ENCODE measurements at regions of chr5 and their contacts with region 1.

Region 1: DNA sequence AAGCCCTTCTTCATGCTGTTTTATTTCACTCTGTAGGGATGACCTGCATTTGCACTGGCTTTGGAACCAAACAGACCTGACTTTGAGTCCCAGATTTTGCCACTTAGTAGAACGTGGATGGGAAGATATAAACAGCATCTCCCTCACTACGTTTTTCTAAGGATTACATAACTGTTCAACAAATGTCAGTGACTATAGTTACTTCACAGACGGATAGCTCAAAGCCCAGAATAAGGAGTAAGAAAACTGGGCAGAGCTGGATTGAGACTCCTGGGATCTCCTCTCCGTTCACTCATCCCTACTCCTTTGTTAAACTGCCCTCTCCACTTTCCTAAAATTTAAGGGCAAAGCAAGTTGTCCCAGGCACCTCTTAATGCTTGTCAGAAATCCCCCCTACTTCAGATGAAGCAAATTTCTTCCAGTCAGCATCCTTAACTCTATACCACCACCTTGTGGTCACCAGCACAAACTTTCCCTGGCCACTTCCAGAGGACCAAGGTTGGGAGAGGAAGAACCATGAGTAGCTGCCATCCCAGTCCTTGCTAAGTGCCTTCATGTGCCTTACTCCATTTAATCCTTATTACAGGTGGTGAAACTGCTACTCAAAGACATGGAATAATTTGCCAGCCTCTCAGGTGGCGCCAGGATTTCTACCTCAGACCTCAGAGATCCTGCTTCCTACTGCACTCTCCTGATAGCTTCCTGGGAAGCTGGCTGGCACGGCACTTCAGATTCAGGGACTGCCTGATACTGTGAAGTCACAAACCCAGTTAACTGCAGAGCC is 38.4 kb downstream of the EGR1 start:
- DNase-seq: peak in 5 of 9 experiments; percentile 2 to 79 (median 36)
- ATAC-seq: peak; percentile 79
- H3K4me3 ChIP-seq: no peak overlapping the region
- H3K4me3 Mint-ChIP-seq: no peak overlapping the region
- H3K27ac ChIP-seq: no peak overlapping the region
- H3K27ac Mint-ChIP-seq: no peak overlapping the region
- H3K4me1 ChIP-seq: no peaks in the 10 kb centered on the region
- H3K4me1 Mint-ChIP-seq: peaks cover 2% of the 10 kb centered on the region
- H3K27me3 ChIP-seq: no peaks in the 10 kb centered on the region
- H3K27me3 Mint-ChIP-seq: no peaks in the 10 kb centered on the region
- CTCF ChIP-seq: peak; percentile 72

Region 2: GRCh38 chr5:137867664-137868063 is 636.0 kb before region 1 on chr5 and contains the start of gene MYOT:
- CTCF ChIA-PET with region 1: no interaction called
- POLR2A ChIA-PET with region 1: no interaction called
- intact Hi-C with region 1: no loop called
- DNase-seq: no peak
- ATAC-seq: no peak
- H3K4me3 ChIP-seq: no peak within 1 kb of the TSS
- H3K4me3 Mint-ChIP-seq: no peak within 1 kb of the TSS
- H3K27ac ChIP-seq: no peak within 1 kb of the TSS
- H3K27ac Mint-ChIP-seq: no peak within 1 kb of the TSS
- H3K4me1 ChIP-seq: no peaks in the 10 kb centered on the region
- H3K4me1 Mint-ChIP-seq: no peaks in the 10 kb centered on the region
- H3K27me3 ChIP-seq: no peaks in the 10 kb centered on the region
- H3K27me3 Mint-ChIP-seq: no peaks in the 10 kb centered on the region
- CTCF ChIP-seq: no peak
- total RNA-seq, gene MYOT: not detected

Region 3: DNA sequence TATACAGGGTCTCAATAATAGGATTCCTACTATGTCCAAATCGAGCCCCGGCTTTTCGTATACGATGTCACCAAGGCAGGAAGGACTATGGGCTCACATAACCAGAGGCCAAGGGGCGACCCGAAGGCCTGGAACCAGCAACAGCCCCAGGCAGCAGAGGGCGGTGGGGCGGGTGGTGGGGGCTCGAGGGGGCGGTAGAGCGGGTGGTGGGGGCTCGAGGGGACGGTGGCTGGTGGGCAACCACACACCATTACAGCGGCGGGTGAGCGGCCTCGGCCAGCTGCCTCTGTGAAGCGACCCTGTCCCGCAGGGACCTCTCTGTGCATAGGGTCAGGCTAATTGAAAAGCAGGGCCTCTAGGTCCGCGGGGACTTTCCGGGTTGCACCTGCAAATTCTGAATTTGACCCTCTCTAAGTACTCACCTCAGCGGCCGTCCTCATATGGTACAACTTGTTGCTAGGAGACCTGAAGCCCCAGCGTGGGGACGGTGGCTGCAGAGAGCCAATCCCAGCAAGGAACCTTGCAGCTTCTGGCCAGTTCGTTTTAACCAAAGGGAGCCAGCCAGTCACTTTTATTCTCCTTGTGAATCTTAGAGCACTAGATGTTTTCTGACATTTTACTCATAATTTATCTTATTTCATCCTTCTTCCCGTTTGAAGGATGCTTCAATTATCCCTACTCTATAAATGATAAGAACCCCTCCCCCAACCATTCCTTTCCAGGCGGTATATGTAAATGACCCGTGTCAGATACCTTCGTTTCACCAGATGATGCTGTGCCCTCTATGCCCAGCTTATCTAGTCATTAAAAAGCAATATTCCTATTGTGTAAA is 364.5 kb before region 1 on chr5 and contains the start of gene NME5:
- CTCF ChIA-PET with region 1: no interaction called
- POLR2A ChIA-PET with region 1: no interaction called
- intact Hi-C with region 1: no loop called
- DNase-seq: no peak
- ATAC-seq: no peak
- H3K4me3 ChIP-seq: no peak within 1 kb of the TSS
- H3K4me3 Mint-ChIP-seq: no peak within 1 kb of the TSS
- H3K27ac ChIP-seq: no peak within 1 kb of the TSS
- H3K27ac Mint-ChIP-seq: no peak within 1 kb of the TSS
- H3K4me1 ChIP-seq: no peaks in the 10 kb centered on the region
- H3K4me1 Mint-ChIP-seq: no peaks in the 10 kb centered on the region
- H3K27me3 ChIP-seq: no peaks in the 10 kb centered on the region
- H3K27me3 Mint-ChIP-seq: peaks cover 26% of the 10 kb centered on the region
- CTCF ChIP-seq: no peak
- total RNA-seq, gene NME5: not detected

Region 4: GRCh38 chr5:138438724-138439476 is 64.8 kb before region 1 on chr5 and contains the start of gene REEP2:
- CTCF ChIA-PET with region 1: interaction called, 291 read pairs
- POLR2A ChIA-PET with region 1: no interaction called
- intact Hi-C with region 1: no loop called
- DNase-seq: peak; percentile 12 to 80 (median 61)
- ATAC-seq: peak; percentile 90
- H3K4me3 ChIP-seq: peak within 1 kb of the TSS; percentile 34 to 43
- H3K4me3 Mint-ChIP-seq: peak within 1 kb of the TSS; percentile 83
- H3K27ac ChIP-seq: no peak within 1 kb of the TSS
- H3K27ac Mint-ChIP-seq: no peak within 1 kb of the TSS
- H3K4me1 ChIP-seq: peaks cover 13% of the 10 kb centered on the region
- H3K4me1 Mint-ChIP-seq: peaks cover 17% of the 10 kb centered on the region
- H3K27me3 ChIP-seq: no peaks in the 10 kb centered on the region
- H3K27me3 Mint-ChIP-seq: no peaks in the 10 kb centered on the region
- CTCF ChIP-seq: no peak
- total RNA-seq, gene REEP2: 0.19 TPM in 1 of 2 experiments, not detected in the other

Region 5: DNA sequence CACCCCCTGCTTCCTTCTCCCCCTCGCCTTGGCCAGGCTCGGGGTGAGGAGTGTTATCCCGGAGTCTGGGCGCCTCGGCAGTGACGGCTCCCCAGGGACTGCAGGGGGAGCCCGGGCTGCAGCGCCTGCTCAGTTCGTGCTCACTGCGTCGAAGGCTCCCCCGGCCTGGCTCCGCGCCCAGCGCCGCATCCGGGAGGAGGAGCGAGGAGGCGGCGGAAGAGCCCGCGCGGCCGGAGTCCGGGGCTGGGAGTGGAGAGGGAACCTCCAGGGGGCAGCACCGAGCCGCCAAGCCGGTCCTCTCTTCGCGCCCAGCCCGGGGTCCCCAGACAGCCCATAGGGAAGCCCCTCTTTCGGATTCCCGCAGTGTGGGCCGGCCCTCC is 39.7 kb before region 1 on chr5:
- CTCF ChIA-PET with region 1: interaction called, 58 read pairs
- POLR2A ChIA-PET with region 1: interaction called, 4 read pairs
- intact Hi-C with region 1: loop called (anchors 1 kb)
- DNase-seq: peak; percentile 85 to 98 (median 93)
- ATAC-seq: peak; percentile 47
- H3K4me3 ChIP-seq: peak overlapping the region; percentile 91 to 97
- H3K4me3 Mint-ChIP-seq: peak overlapping the region; percentile 91
- H3K27ac ChIP-seq: peak overlapping the region; percentile 79 to 100
- H3K27ac Mint-ChIP-seq: peak overlapping the region; percentile 93
- H3K4me1 ChIP-seq: peaks cover 51% of the 10 kb centered on the region
- H3K4me1 Mint-ChIP-seq: peaks cover 48% of the 10 kb centered on the region
- H3K27me3 ChIP-seq: no peaks in the 10 kb centered on the region
- H3K27me3 Mint-ChIP-seq: no peaks in the 10 kb centered on the region
- CTCF ChIP-seq: peak; percentile 87

Region 6: GRCh38 chr5:138515556-138516245 is 12.0 kb after region 1 on chr5:
- CTCF ChIA-PET with region 1: interaction called, 15 read pairs
- POLR2A ChIA-PET with region 1: no interaction called
- intact Hi-C with region 1: no loop called
- DNase-seq: no peak
- ATAC-seq: no peak
- H3K4me3 ChIP-seq: no peak overlapping the region
- H3K4me3 Mint-ChIP-seq: no peak overlapping the region
- H3K27ac ChIP-seq: no peak overlapping the region
- H3K27ac Mint-ChIP-seq: no peak overlapping the region
- H3K4me1 ChIP-seq: no peaks in the 10 kb centered on the region
- H3K4me1 Mint-ChIP-seq: peaks cover 10% of the 10 kb centered on the region
- H3K27me3 ChIP-seq: no peaks in the 10 kb centered on the region
- H3K27me3 Mint-ChIP-seq: no peaks in the 10 kb centered on the region
- CTCF ChIP-seq: no peak

Region 7: GRCh38 chr5:138528208-138528607 is 24.5 kb after region 1 on chr5:
- CTCF ChIA-PET with region 1: interaction called, 10 read pairs
- POLR2A ChIA-PET with region 1: no interaction called
- intact Hi-C with region 1: no loop called
- DNase-seq: no peak
- ATAC-seq: no peak
- H3K4me3 ChIP-seq: no peak overlapping the region
- H3K4me3 Mint-ChIP-seq: no peak overlapping the region
- H3K27ac ChIP-seq: no peak overlapping the region
- H3K27ac Mint-ChIP-seq: no peak overlapping the region
- H3K4me1 ChIP-seq: peaks cover 11% of the 10 kb centered on the region
- H3K4me1 Mint-ChIP-seq: peaks cover 56% of the 10 kb centered on the region
- H3K27me3 ChIP-seq: no peaks in the 10 kb centered on the region
- H3K27me3 Mint-ChIP-seq: no peaks in the 10 kb centered on the region
- CTCF ChIP-seq: no peak

Region 8: DNA sequence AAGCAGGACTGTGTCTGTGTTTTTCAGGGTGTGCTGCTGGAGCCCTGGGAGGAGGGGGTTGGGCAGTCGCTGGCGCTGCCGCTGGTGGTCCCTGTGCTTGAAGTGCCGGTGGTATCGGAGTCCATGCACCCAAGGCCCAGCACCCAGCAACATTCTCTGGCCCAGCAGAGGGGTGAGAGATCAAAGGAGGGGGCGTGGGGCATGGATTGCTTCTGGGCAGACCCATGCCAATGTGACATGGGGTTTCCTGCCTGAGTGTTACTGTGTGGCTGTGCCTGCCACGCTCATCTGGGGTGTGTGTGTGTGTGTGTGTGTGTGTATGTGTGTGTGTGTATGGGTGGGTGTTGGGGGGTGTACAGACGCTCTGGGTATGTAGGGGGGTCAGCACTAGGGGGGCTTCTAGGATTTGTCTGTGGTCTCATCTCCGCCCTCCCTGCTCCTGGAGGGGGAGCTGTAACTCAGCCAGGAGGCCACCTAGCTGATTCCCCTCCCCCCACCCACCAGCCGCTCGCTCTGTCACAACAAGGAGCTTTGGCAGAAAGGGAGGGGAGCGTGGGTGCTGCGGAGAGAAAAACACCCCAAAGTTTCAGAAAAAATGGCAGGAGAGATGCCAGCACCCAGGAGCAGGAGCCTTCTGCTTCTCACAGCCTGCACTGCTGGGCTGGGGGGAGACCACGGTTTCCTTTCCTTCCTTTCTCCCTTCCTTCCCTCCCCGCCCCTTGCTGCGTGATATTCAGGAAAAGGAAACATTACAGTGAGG is 107.4 kb after region 1 on chr5:
- CTCF ChIA-PET with region 1: no interaction called
- POLR2A ChIA-PET with region 1: no interaction called
- intact Hi-C with region 1: no loop called
- DNase-seq: peak in 2 of 9 experiments; percentile 26 to 43
- ATAC-seq: peak; percentile 42
- H3K4me3 ChIP-seq: no peak overlapping the region
- H3K4me3 Mint-ChIP-seq: peak overlapping the region; percentile 16
- H3K27ac ChIP-seq: no peak overlapping the region
- H3K27ac Mint-ChIP-seq: no peak overlapping the region
- H3K4me1 ChIP-seq: peaks cover 13% of the 10 kb centered on the region
- H3K4me1 Mint-ChIP-seq: peaks cover 11% of the 10 kb centered on the region
- H3K27me3 ChIP-seq: peaks cover 4 to 8% of the 10 kb centered on the region in 2 experiments
- H3K27me3 Mint-ChIP-seq: peaks cover 52% of the 10 kb centered on the region
- CTCF ChIP-seq: no peak

Region 9: GRCh38 chr5:139004374-139005307 is 501.0 kb after region 1 on chr5:
- CTCF ChIA-PET with region 1: no interaction called
- POLR2A ChIA-PET with region 1: no interaction called
- intact Hi-C with region 1: no loop called
- DNase-seq: no peak
- ATAC-seq: no peak
- H3K4me3 ChIP-seq: no peak overlapping the region
- H3K4me3 Mint-ChIP-seq: no peak overlapping the region
- H3K27ac ChIP-seq: no peak overlapping the region
- H3K27ac Mint-ChIP-seq: no peak overlapping the region
- H3K4me1 ChIP-seq: no peaks in the 10 kb centered on the region
- H3K4me1 Mint-ChIP-seq: no peaks in the 10 kb centered on the region
- H3K27me3 ChIP-seq: no peaks in the 10 kb centered on the region
- H3K27me3 Mint-ChIP-seq: no peaks in the 10 kb centered on the region
- CTCF ChIP-seq: no peak

Measured in CD8-positive, alpha-beta T cell (primary cell).